ENCODE measurements at regions of chr6 and their contacts with region 1.

Region 1: DNA sequence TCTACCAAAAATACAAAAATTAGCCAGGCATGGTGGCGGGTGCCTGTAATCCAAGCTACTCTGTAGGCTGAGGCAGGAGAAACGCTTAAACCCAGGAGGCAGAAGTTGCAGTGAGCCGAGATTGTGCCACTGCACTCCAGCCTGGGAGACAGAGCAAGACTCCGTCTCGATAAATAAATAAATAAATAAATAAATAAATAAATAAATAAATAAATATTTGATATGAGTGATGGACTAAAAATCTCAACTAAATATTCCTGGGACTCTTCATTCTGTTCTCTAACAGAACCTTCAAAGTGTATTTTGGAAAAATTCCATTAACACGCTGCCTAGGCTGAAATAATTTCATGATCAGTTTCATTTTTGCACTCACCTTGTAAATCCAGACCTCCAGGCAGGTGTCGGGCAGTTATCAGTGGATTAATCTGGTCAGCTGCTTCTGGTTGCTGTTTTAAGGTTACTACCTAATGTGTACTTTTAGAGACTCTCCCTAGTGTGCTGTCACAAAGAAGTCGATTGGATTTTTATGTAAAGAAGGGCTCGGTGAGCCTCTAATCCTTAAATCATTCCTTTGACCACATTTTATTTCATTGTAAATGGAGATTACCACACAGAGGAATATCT is 112.8 kb upstream of the AHI1 start:
- DNase-seq: no peak
- H3K4me3 ChIP-seq: no peak overlapping the region
- H3K27ac ChIP-seq: no peak overlapping the region
- H3K4me1 ChIP-seq: no peaks in the 10 kb centered on the region
- CTCF ChIP-seq: no peak

Region 2: DNA sequence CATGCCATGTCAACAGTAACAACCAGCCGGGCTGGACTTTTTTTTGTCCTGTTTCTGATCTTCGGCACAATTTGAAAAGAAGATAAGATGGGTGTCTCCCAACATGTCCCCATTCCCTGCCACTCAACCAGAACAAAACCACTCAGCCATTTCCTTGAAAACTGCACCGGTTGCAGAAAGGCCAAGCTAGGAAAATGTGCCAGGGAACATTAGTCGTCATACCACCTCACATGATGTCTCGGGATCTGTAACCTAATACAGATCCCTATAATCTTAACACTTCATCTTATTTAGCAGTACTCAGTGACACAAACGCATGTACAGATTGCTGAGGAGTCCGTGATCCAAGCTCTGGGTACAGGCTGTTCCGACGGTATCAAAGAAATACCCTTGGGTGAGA is 706.9 kb before region 1 on chr6:
- CTCF ChIA-PET with region 1: no interaction called
- POLR2A ChIA-PET with region 1: interaction called, 13 read pairs
- intact Hi-C with region 1: no loop called
- DNase-seq: no peak
- H3K4me3 ChIP-seq: no peak overlapping the region
- H3K27ac ChIP-seq: no peak overlapping the region
- H3K4me1 ChIP-seq: no peaks in the 10 kb centered on the region
- CTCF ChIP-seq: no peak

Region 3: GRCh38 chr6:134995536-134995935 is 614.8 kb before region 1 on chr6:
- CTCF ChIA-PET with region 1: no interaction called
- POLR2A ChIA-PET with region 1: no interaction called
- intact Hi-C with region 1: no loop called
- DNase-seq: no peak
- H3K4me3 ChIP-seq: no peak overlapping the region
- H3K27ac ChIP-seq: no peak overlapping the region
- H3K4me1 ChIP-seq: no peaks in the 10 kb centered on the region
- CTCF ChIP-seq: no peak

Measured in OCI-LY7 (cell line).